ENCODE measurements at regions of chr12 and their contacts with region 1.

Region 1: DNA sequence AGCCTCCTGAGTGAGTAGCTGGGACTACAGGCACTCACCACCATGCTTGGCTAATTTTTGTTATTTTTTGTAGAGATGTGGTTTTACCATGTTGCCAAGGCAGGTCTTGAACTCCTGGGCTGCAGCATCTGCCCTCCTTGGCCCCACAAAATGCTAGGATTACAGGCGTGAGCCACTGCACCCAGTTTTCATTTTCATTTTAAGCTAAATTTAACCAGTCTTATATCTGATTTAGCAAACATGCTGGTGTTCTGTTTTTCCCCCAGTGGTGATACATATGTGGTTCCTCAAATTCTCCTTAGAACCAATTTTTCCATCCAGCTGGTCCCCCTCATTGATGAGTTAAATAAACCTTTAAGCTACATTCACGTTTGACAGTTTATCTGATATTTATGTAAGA is 43.8 kb upstream of the BICD1 start:
- DNase-seq: no peak

Region 2: DNA sequence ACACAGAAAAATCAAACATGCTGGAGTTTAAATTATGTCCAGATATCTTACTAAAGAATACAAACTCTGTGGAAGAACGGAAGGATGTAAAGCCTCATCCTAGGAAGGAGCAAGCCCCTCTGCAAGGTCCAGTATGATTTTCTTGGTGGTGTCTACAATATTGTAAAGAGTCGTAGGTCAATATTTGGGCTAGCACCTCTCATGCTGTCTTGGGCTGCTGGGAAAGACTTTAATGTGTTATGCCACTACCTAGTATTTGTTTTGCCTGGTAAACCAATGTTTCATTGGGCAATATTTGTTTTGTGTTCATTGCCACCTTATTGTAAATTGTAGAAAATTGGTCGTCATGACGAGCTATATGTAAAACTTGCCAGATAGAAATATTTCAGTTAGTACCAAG is 77.0 kb before region 1 on chr12:
- intact Hi-C with region 1: no loop called
- DNase-seq: no peak

Region 3: DNA sequence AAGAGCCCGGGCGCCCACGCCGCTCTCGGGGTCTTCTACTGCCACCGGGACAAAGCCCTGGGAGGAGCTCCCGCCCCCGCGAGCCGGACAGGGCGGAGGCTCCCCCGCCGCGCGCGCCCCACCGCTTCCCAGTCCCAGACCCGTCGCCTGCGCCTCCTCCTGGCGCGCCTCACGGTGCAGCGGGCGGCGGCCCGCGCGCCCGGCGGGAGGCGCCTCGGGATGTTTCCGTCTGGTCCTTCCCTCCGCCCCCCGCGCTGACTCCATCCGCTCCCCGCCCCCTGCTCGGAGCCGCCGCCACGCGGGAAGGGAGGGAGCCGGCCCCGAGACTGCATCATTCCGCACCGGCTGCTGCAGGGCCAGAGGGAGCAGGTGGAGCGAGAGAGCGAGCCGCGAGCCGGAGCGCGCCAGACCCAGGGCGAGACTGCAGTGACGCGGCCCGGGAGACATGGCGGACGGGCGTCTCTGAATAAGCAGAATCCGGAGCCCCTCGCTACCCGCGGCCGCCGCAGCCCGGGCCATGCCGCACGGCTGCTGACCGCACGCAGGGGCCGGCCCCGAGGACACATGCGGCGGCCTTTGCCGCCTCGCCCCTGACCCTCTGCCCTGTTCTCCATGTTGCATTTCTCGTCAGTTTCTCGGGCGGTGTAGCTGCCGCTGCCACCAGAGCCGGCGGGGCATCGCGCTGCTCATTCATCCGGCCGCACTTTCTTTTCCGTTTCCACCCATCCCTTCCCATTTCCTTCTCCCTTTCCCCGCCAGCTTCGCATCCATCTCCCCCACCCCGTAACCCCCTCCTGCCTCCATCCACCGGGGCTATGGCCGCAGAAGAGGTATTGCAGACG is 43.9 kb after region 1 on chr12 and contains the start of gene BICD1:
- intact Hi-C with region 1: loop called (anchors 5 kb)
- DNase-seq: peak; percentile 86 to 98 (median 90)

Region 4: GRCh38 chr12:32120419-32120818 is 57.5 kb after region 1 on chr12:
- intact Hi-C with region 1: no loop called
- DNase-seq: no peak

Region 5: DNA sequence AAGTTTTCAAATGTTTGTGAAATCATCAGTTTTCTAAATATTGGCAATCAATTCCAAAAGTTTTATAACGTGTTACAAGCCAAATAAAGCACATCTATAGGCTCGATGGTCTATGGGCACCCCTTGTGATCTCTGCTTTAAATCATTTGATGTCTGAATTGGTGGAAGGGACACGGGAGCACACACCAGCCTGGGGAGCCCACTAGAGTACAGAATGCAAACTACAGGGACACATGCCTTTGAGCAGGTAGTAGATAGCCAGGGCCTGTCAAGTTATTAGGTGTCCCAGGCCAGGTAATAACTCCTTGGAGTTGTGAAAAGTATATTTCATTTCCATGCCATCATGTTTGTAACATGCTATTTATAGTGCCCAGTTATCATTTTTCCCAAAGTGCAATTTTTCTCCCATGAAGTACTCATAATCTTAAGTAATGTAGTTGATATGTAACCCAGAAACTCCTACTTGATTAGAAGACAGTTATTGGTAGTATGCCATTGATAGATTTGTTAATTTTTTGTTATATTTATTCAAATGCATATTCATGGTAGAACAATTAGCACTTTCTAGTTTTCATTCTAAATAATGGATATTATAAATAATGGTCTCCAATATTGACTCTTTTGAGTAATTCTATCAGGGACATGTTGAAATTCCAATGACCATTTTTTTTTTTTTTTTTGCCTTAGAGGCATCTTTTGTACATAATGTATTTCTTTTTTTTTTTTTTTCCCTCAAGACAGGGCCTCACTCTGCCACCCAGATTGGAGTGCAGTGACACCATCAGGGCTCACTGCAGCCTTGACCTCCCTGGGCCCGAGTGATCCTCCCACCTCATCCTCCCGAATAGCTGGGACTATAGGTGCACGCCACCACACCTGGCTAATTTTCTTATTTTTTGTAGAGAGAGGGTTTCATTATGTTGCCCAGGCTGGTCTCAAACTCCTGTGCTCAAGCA is 239.6 kb after region 1 on chr12:
- intact Hi-C with region 1: loop called (anchors 1 kb)
- DNase-seq: peak in 1 of 10 donors; percentile 5

Measured in posterior cingulate gyrus (tissue), 11 donors.